Transverse colon (tissue), 4 donors: ENCODE measurements at regions of chr12 and their contacts with region 1.

Region 1: GRCh38 chr12:78118036-78118435 is 287.3 kb downstream of the NAV3 start:
- DNase-seq: no peak
- H3K4me3 ChIP-seq: no peak overlapping the region
- H3K27ac ChIP-seq: no peak overlapping the region
- H3K4me1 ChIP-seq: no peaks in the 10 kb centered on the region
- H3K27me3 ChIP-seq: no peaks in the 10 kb centered on the region
- CTCF ChIP-seq: no peak
- EP300 ChIP-seq: no peak
- POLR2A ChIP-seq: no peak

Region 2: GRCh38 chr12:78002878-78003277 is 115.2 kb before region 1 on chr12:
- in situ Hi-C with region 1: loop called in 1 of 4 experiments (anchors 10 kb)
- intact Hi-C with region 1: no loop called
- DNase-seq: no peak
- H3K4me3 ChIP-seq: no peak overlapping the region
- H3K27ac ChIP-seq: no peak overlapping the region
- H3K4me1 ChIP-seq: peaks cover 0 to 17% (median 8%) of the 10 kb centered on the region in 4 donors
- H3K27me3 ChIP-seq: no peaks in the 10 kb centered on the region
- CTCF ChIP-seq: no peak
- EP300 ChIP-seq: no peak
- POLR2A ChIP-seq: no peak

Region 3: DNA sequence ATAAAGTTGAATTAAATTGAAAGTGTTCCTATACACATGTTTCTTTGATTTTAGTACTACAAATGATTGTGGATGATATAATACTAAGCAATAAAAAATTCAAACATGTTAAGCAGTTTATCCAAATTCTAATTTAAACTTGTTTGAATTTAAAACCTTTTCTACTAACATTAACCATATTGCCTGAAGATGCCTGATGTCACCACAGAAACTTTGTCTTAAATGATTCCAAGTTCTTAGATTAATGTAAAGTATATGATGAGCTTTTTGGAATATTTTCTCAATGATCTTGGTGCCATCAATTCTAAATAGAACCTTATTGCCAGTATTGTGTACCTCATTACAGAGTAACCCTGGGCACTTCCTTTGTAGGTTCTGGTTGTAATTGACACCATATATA is 27.8 kb before region 1 on chr12:
- in situ Hi-C with region 1: no loop called
- intact Hi-C with region 1: loop called (anchors 2 kb)
- DNase-seq: no peak
- H3K4me3 ChIP-seq: no peak overlapping the region
- H3K27ac ChIP-seq: no peak overlapping the region
- H3K4me1 ChIP-seq: peaks cover 0 to 5% (median 0%) of the 10 kb centered on the region in 4 donors
- H3K27me3 ChIP-seq: no peaks in the 10 kb centered on the region
- CTCF ChIP-seq: no peak
- EP300 ChIP-seq: no peak
- POLR2A ChIP-seq: no peak